ENCODE measurements at regions of chr16 and their contacts with region 1.

Region 1: GRCh38 chr16:58629572-58630104 is at the start of gene CNOT1:
- DNase-seq: peak; percentile 92 to 100 (median 99)
- ATAC-seq: peak; percentile 91
- H3K4me3 ChIP-seq: peak within 1 kb of the TSS; percentile 84
- H3K4me3 Mint-ChIP-seq: peak within 1 kb of the TSS; percentile 94 to 100 (median 98)
- H3K27ac ChIP-seq: peak within 1 kb of the TSS; percentile 96
- H3K27ac Mint-ChIP-seq: peak within 1 kb of the TSS; percentile 99 to 100 (median 100)
- H3K4me1 ChIP-seq: peaks cover 14 to 24% of the 10 kb centered on the region in 2 donors
- H3K4me1 Mint-ChIP-seq: peaks cover 16 to 47% (median 31%) of the 10 kb centered on the region in 7 donors
- H3K27me3 ChIP-seq: no peaks in the 10 kb centered on the region
- H3K27me3 Mint-ChIP-seq: peaks cover 0 to 2% (median 0%) of the 10 kb centered on the region in 5 donors
- total RNA-seq, gene CNOT1: 216 to 249 (median 236) TPM

Region 2: DNA sequence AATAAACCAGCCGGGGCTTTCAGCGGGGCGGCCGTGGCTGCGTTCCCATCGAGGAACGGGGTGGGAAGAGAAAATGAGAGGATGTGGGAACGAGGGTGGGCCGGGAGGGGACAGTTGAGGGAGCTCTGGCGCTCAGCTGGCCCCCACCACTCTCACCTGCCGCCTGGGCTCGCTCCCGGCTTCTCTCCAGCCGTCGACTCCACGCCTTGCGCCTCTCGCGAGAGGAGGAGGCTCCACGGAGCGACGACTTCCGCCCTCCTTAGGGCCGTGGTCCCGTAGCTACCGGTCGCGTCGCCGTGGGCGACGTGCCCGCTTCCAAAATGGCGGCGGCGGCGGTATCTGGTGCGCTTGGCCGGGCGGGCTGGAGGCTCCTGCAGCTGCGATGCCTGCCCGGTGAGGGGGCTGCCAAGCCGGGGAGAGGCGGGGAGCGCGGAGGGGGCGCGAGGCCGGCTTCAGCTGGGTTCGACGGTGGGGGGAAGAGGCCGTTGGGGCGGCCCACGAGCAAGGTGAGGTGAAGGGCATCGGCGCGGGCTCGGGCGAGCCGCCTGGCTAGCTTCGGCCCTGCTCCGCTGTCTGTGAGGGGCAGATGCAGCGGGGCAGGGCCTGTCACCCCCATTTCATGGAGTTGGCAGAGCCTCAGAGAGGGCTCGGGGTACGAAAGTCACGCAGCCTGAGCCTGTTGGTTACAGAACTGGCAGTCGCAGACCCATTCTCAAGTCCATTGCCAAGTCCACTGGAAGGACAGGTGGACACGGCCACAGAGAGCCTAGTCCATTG is 1182.3 kb before region 1 on chr16 and contains the starts of genes CIAPIN1 and COQ9:
- CTCF ChIA-PET with region 1: no interaction called
- POLR2A ChIA-PET with region 1: no interaction called
- intact Hi-C with region 1: loop called in 1 of 2 experiments (anchors 2 kb)
- DNase-seq: peak; percentile 83 to 94 (median 88)
- ATAC-seq: peak; percentile 99
- H3K4me3 ChIP-seq: peak within 1 kb of the TSS; percentile 84
- H3K4me3 Mint-ChIP-seq: peak within 1 kb of the TSS; percentile 90 to 97 (median 92)
- H3K27ac ChIP-seq: peak within 1 kb of the TSS; percentile 87
- H3K27ac Mint-ChIP-seq: peak within 1 kb of the TSS; percentile 75 to 96 (median 90)
- H3K4me1 ChIP-seq: peaks cover 7 to 17% of the 10 kb centered on the region in 2 donors
- H3K4me1 Mint-ChIP-seq: peaks cover 15 to 64% (median 45%) of the 10 kb centered on the region in 7 donors
- H3K27me3 ChIP-seq: no peaks in the 10 kb centered on the region
- H3K27me3 Mint-ChIP-seq: no peaks in the 10 kb centered on the region
- total RNA-seq, gene CIAPIN1: 33.6 to 52.8 (median 35.8) TPM
- total RNA-seq, gene COQ9: 16.4 to 45.4 (median 36.6) TPM

Region 3: GRCh38 chr16:58025351-58026138 is 604.1 kb before region 1 on chr16 and contains the start of gene MMP15:
- CTCF ChIA-PET with region 1: no interaction called
- POLR2A ChIA-PET with region 1: no interaction called
- intact Hi-C with region 1: loop called (anchors 1 to 10 kb)
- DNase-seq: peak; percentile 27 to 74 (median 43)
- ATAC-seq: peak; percentile 76
- H3K4me3 ChIP-seq: peak within 1 kb of the TSS; percentile 78
- H3K4me3 Mint-ChIP-seq: peak within 1 kb of the TSS; percentile 90 to 95 (median 93)
- H3K27ac ChIP-seq: no peak within 1 kb of the TSS
- H3K27ac Mint-ChIP-seq: peak within 1 kb of the TSS; percentile 73 to 90 (median 84)
- H3K4me1 ChIP-seq: peaks cover 8 to 9% of the 10 kb centered on the region in 2 donors
- H3K4me1 Mint-ChIP-seq: peaks cover 6 to 18% (median 12%) of the 10 kb centered on the region in 7 donors
- H3K27me3 ChIP-seq: no peaks in the 10 kb centered on the region
- H3K27me3 Mint-ChIP-seq: peaks cover 0 to 39% (median 3%) of the 10 kb centered on the region in 5 donors
- total RNA-seq, gene MMP15: 0.20 to 0.85 (median 0.69) TPM

Region 4: GRCh38 chr16:58249780-58250478 is 379.7 kb before region 1 on chr16:
- CTCF ChIA-PET with region 1: no interaction called
- POLR2A ChIA-PET with region 1: no interaction called
- intact Hi-C with region 1: loop called (anchors 1 kb)
- DNase-seq: peak; percentile 74 to 91 (median 86)
- ATAC-seq: peak; percentile 98
- H3K4me3 ChIP-seq: peak overlapping the region; percentile 77
- H3K4me3 Mint-ChIP-seq: peak overlapping the region; percentile 77 to 87 (median 82)
- H3K27ac ChIP-seq: peak overlapping the region; percentile 43
- H3K27ac Mint-ChIP-seq: peak overlapping the region in 8 of 9 donors; percentile 31 to 86 (median 67)
- H3K4me1 ChIP-seq: peaks cover 5 to 7% of the 10 kb centered on the region in 2 donors
- H3K4me1 Mint-ChIP-seq: peaks cover 6 to 13% (median 12%) of the 10 kb centered on the region in 7 donors
- H3K27me3 ChIP-seq: no peaks in the 10 kb centered on the region
- H3K27me3 Mint-ChIP-seq: peaks cover 0 to 17% (median under 1%) of the 10 kb centered on the region in 5 donors

Region 5: DNA sequence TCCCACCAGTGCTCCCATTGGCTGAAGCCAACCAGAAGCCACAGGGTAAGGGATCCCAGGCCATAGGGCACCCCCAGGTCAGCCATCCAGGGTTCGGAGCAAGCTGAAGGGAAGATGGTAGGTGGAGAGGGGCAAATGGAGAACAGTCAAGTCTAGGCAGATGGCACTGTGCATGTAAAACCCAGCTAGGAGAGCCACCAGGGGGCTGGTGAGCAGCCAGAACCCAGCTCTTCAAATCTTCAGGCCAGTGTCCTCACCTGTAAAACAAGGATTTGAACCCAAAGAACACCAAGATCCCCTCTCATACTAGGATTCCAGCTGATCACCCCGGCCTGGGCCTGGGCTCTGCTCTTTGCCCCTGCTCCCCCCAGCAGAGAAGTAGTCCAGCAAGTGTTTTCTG is 193.9 kb before region 1 on chr16:
- CTCF ChIA-PET with region 1: no interaction called
- POLR2A ChIA-PET with region 1: no interaction called
- intact Hi-C with region 1: no loop called
- DNase-seq: no peak
- ATAC-seq: no peak
- H3K4me3 ChIP-seq: no peak overlapping the region
- H3K4me3 Mint-ChIP-seq: no peak overlapping the region
- H3K27ac ChIP-seq: no peak overlapping the region
- H3K27ac Mint-ChIP-seq: no peak overlapping the region
- H3K4me1 ChIP-seq: no peaks in the 10 kb centered on the region
- H3K4me1 Mint-ChIP-seq: no peaks in the 10 kb centered on the region
- H3K27me3 ChIP-seq: no peaks in the 10 kb centered on the region
- H3K27me3 Mint-ChIP-seq: peaks cover 0 to 17% (median 3%) of the 10 kb centered on the region in 5 donors

Region 6: GRCh38 chr16:58515125-58515870 is 114.3 kb before region 1 on chr16 and contains the start of gene SETD6:
- CTCF ChIA-PET with region 1: interaction called, 3 read pairs
- POLR2A ChIA-PET with region 1: interaction called, 3 read pairs
- intact Hi-C with region 1: loop called (anchors 1 kb)
- DNase-seq: peak; percentile 49 to 89 (median 61)
- ATAC-seq: peak; percentile 85
- H3K4me3 ChIP-seq: peak within 1 kb of the TSS; percentile 82
- H3K4me3 Mint-ChIP-seq: peak within 1 kb of the TSS; percentile 78 to 95 (median 88)
- H3K27ac ChIP-seq: peak within 1 kb of the TSS; percentile 81
- H3K27ac Mint-ChIP-seq: peak within 1 kb of the TSS; percentile 69 to 95 (median 87)
- H3K4me1 ChIP-seq: peaks cover 7 to 10% of the 10 kb centered on the region in 2 donors
- H3K4me1 Mint-ChIP-seq: peaks cover 9 to 40% (median 26%) of the 10 kb centered on the region in 7 donors
- H3K27me3 ChIP-seq: no peaks in the 10 kb centered on the region
- H3K27me3 Mint-ChIP-seq: no peaks in the 10 kb centered on the region
- total RNA-seq, gene SETD6: 20.7 to 41.3 (median 39.0) TPM

Region 7: DNA sequence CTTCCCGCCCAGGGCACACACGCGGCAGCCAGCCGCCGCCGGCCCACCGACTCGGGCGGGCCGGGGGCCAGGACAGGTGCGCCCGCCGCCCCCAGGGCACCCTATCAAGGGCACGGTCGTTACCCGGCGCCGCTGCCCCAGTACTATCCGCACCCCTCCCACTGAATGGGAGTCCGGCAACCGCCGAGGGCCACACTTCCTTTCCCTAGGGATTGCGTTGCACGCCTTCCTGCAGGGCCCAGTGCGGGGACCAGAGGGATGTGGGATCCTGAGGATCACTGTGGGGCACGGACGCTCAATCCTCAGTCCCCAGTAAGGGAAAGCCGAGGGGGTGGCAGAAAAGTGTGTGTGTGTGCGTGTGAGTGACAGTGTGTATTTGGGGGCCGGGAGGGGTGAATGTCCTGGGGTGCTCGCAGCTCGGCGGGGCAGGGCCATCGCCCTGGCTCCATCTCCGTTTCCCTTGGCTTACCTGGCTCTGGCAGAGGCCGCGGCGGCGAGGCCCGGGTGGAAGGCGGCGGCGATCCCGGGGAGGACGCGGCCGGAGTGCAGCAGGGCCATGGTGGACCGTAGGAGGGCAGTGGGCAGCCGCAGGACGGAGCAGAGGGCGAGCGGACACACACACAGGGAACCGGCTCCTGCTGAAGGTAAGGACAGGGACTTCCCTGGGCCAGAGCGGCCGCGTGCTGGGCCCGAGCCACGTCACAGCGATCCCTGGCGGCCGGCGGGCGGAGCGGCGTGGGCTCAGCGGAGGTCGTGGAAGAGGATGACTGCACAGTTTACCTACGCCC is 104.2 kb after region 1 on chr16 and contains the start of gene GOT2:
- CTCF ChIA-PET with region 1: no interaction called
- POLR2A ChIA-PET with region 1: interaction called, 3 read pairs
- intact Hi-C with region 1: loop called (anchors 1 kb)
- DNase-seq: peak; percentile 61 to 87 (median 77)
- ATAC-seq: peak; percentile 99
- H3K4me3 ChIP-seq: peak within 1 kb of the TSS; percentile 83
- H3K4me3 Mint-ChIP-seq: peak within 1 kb of the TSS; percentile 93 to 99 (median 98)
- H3K27ac ChIP-seq: peak within 1 kb of the TSS; percentile 79
- H3K27ac Mint-ChIP-seq: peak within 1 kb of the TSS; percentile 31 to 95 (median 91)
- H3K4me1 ChIP-seq: peaks cover 9 to 15% of the 10 kb centered on the region in 2 donors
- H3K4me1 Mint-ChIP-seq: peaks cover 16 to 50% (median 42%) of the 10 kb centered on the region in 7 donors
- H3K27me3 ChIP-seq: no peaks in the 10 kb centered on the region
- H3K27me3 Mint-ChIP-seq: peaks cover 0 to 3% (median 0%) of the 10 kb centered on the region in 5 donors
- total RNA-seq, gene GOT2: 24.3 to 76.6 (median 38.0) TPM

Measured in naive thymus-derived CD4-positive, alpha-beta T cell (primary cell).